HCT116 (cell line): ENCODE measurements at regions of chr1 and their contacts with region 1.

Region 1: DNA sequence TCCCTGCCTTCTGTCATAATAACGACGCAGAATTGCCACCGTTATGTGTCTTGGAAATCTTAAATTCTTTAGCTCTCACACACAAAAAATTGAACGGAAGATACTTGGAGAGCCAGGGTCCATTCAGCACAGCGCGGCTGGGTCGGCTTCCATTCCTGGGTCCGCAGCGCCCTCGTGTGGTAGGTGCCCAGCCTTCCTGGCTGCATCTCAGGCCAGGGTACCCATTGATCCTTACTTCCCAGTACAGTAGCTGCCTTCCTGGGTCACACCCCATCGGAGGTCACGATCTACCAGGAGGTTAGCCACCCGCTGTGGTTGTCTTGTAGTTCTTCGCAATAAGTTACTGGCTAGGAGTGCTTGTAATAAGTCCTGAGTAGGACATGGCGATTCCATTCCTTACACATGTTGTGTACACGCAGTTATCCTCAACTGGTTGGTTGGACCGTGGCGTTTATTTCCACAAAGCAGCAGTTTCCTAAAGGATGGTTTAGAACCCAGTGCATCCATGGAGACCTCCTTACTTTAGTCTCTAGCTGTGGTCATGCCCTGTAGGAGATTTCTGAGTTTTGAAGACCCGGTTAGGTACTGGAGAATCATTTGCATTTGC is 9.9 kb upstream of the MTARC1 start:
- DNase-seq: peak; percentile 35
- ATAC-seq: peak; percentile 100
- H3K4me3 ChIP-seq: no peak overlapping the region
- H3K27ac ChIP-seq: no peak overlapping the region
- H3K4me1 ChIP-seq: no peaks in the 10 kb centered on the region
- H3K27me3 ChIP-seq: no peaks in the 10 kb centered on the region
- CTCF ChIP-seq: peak; percentile 78 to 99 (median 92)
- POLR2A ChIP-seq: no peak
- RAD21 ChIP-seq: peak; percentile 95

Region 2: GRCh38 chr1:220189750-220190347 is 587.0 kb before region 1 on chr1:
- CTCF ChIA-PET with region 1: interaction called, 5 read pairs
- POLR2A ChIA-PET with region 1: no interaction called
- RAD21 ChIA-PET with region 1: no interaction called
- intact Hi-C with region 1: loop called (anchors 5 kb)
- DNase-seq: peak; percentile 23
- ATAC-seq: peak; percentile 73
- H3K4me3 ChIP-seq: no peak overlapping the region
- H3K27ac ChIP-seq: no peak overlapping the region
- H3K4me1 ChIP-seq: no peaks in the 10 kb centered on the region
- H3K27me3 ChIP-seq: no peaks in the 10 kb centered on the region
- CTCF ChIP-seq: peak; percentile 41 to 56 (median 44); a peak in 4 of 6 replicates
- POLR2A ChIP-seq: no peak
- RAD21 ChIP-seq: peak; percentile 62

Region 3: GRCh38 chr1:220281159-220281574 is 495.7 kb before region 1 on chr1:
- CTCF ChIA-PET with region 1: interaction called, 47 read pairs
- POLR2A ChIA-PET with region 1: no interaction called
- RAD21 ChIA-PET with region 1: interaction called in 1 of 2 experiments, 4 read pairs
- intact Hi-C with region 1: loop called (anchors 1 kb)
- DNase-seq: peak; percentile 24
- ATAC-seq: peak; percentile 83
- H3K4me3 ChIP-seq: no peak overlapping the region
- H3K27ac ChIP-seq: no peak overlapping the region
- H3K4me1 ChIP-seq: no peaks in the 10 kb centered on the region
- H3K27me3 ChIP-seq: no peaks in the 10 kb centered on the region
- CTCF ChIP-seq: peak; percentile 55 to 73 (median 65)
- POLR2A ChIP-seq: no peak
- RAD21 ChIP-seq: peak; percentile 87

Region 4: DNA sequence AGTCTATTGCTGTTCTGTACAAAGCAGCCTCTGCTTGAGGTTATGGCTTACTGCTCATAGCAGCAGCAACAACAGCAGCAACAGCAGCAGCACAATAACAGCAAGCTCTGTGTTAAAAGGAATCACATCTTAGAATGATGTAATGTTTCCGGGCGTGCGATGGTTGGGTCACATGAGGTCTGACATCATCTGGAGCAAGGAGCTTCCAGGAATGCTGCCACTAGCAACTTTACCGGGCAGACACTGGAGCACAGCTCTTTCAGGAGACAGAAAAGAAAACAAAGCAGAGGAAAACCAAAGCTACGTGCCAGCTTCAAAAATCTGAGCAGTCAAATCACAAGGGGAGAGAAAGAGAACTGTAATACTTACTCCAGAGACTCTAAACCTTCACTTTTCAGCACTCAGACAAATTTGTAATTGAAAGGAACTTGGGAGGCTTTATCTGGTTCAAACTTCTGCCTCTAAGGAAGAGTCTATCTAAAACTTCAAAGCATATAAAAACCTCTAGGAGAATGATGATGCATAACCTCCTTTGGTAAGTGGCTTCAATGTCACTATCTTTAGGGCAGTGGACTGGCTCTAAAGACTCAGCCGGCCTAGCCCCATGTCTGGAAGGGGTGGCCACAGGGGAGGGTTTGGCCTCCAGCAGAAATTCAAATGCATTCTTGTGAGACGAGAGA is 476.2 kb before region 1 on chr1:
- CTCF ChIA-PET with region 1: interaction called, 21 read pairs
- POLR2A ChIA-PET with region 1: no interaction called
- RAD21 ChIA-PET with region 1: no interaction called
- intact Hi-C with region 1: loop called (anchors 1 kb)
- DNase-seq: no peak
- ATAC-seq: no peak
- H3K4me3 ChIP-seq: no peak overlapping the region
- H3K27ac ChIP-seq: no peak overlapping the region
- H3K4me1 ChIP-seq: no peaks in the 10 kb centered on the region
- H3K27me3 ChIP-seq: no peaks in the 10 kb centered on the region
- CTCF ChIP-seq: no peak
- POLR2A ChIP-seq: no peak
- RAD21 ChIP-seq: no peak

Region 5: DNA sequence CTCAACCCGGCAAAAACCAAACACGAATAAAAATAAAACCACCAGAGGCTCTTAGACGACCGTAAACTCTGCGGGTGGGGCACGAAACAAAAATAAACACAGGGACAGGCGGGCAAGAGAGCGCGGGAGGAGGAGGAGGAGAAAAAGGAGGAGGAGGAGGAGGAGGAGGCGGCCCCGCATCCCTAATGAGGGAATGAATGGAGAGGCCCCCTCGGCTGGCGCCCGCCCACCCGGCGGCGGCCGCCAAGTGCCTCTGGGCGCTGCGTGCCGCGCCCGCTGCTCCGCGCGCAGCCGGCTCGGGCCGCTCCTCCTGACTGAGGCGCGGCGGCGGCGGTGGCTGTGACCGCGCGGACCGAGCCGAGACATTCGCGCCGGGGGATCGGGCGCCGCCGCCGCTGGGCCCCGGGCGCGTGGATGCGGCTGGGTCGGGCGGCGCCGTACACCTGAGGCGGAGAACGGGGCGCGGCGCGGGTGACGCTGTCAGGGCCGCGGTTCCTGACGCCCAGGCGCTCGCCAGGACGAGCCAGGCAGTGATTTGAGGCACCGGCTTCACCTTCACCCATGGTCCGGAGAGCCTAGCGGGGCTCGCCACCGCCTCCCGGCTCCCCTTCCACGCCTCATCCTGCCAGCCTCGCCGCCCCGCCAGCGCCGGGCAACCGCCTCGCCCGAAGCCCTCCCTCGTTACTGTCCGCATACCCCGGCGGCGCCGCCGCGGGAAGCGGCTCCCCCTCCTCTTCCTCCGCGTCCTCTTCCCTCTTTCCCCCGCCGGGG is 248.7 kb before region 1 on chr1 and contains the start of gene MARK1:
- CTCF ChIA-PET with region 1: no interaction called
- POLR2A ChIA-PET with region 1: no interaction called
- RAD21 ChIA-PET with region 1: no interaction called
- intact Hi-C with region 1: loop called (anchors 5 kb)
- DNase-seq: no peak
- ATAC-seq: peak; percentile 84
- H3K4me3 ChIP-seq: peak within 1 kb of the TSS; percentile 58 to 71
- H3K27ac ChIP-seq: peak within 1 kb of the TSS; percentile 57
- H3K4me1 ChIP-seq: peaks cover 0 to 22% of the 10 kb centered on the region in 2 experiments; a peak in 1 of 4 replicates
- H3K27me3 ChIP-seq: no peaks in the 10 kb centered on the region
- CTCF ChIP-seq: no peak
- POLR2A ChIP-seq: no peak
- RAD21 ChIP-seq: no peak
- total RNA-seq, gene MARK1: 3.6 TPM